ENCODE measurements at regions of chr11 and their contacts with region 1.

Region 1: GRCh38 chr11:1892116-1892515 is 421 bp upstream of the PRR33 start:
- DNase-seq: no peak
- H3K4me3 ChIP-seq: no peak overlapping the region
- H3K27ac ChIP-seq: no peak overlapping the region
- H3K27me3 ChIP-seq: peaks cover 0 to 3% (median 0%) of the 10 kb centered on the region in 45 donors
- CTCF ChIP-seq: no peak

Region 2: DNA sequence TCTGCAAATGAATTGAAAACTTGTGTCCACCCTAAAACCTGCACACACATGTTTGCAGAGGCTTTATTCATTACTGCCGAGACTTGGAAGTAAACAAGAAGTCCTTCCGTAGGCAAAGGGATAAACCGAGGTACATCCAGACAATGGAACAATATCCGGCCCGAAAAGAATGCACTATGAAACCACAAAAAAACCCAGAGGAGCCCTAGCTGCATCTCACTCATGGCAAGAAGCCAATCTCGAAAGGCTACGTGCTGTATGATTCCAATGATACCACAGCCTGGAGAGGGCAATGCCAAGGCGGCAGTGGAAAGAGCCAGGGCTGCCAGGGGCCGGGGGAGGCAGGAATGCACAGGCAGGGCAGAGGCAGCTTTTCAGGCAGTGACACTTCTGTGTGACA is 51.9 kb after region 1 on chr11:
- intact Hi-C with region 1: loop called in 1 of 2 experiments (anchors 1 kb)
- DNase-seq: no peak
- H3K4me3 ChIP-seq: no peak overlapping the region
- H3K27ac ChIP-seq: no peak overlapping the region
- H3K27me3 ChIP-seq: peaks cover 0 to under 1% (median 0%) of the 10 kb centered on the region in 45 donors
- CTCF ChIP-seq: no peak

Region 3: GRCh38 chr11:1968454-1969002 is 76.4 kb after region 1 on chr11:
- intact Hi-C with region 1: no loop called
- DNase-seq: peak in 1 of 10 donors; percentile 14
- H3K4me3 ChIP-seq: no peak overlapping the region
- H3K27ac ChIP-seq: no peak overlapping the region
- H3K27me3 ChIP-seq: no peaks in the 10 kb centered on the region
- CTCF ChIP-seq: no peak

Measured in dorsolateral prefrontal cortex (tissue), 120 donors.